Right cardiac atrium (tissue), 5 donors: ENCODE measurements at regions of chr1 and their contacts with region 1.

Region 1: DNA sequence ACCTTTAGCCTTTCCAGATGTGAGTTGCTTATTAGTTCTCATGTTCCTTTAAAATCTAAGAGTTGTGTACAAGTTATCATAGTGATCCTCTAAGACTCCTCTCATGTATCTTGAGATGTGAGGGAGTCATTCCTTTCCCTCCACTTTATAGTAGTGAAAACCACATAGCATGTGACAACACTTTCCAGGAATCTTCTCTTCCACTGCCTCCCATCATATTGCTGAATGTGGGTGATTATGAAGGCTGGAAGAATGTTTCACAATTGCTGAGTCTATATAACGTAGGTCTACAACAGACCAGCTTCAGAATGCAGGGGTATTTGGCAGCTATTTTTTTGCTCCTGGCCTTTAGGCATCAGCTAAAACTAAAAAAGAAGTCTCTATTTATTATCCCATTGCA is 44.7 kb upstream of the LRRC7 start:
- DNase-seq: no peak
- ATAC-seq: no peak
- H3K4me3 ChIP-seq: no peak overlapping the region
- H3K27ac ChIP-seq: no peak overlapping the region
- H3K4me1 ChIP-seq: no peaks in the 10 kb centered on the region
- H3K27me3 ChIP-seq: no peaks in the 10 kb centered on the region

Region 2: GRCh38 chr1:69551476-69552324 is 28.7 kb after region 1 on chr1:
- intact Hi-C with region 1: loop called in 1 of 4 experiments (anchors 2 kb)
- DNase-seq: no peak
- ATAC-seq: no peak
- H3K4me3 ChIP-seq: no peak overlapping the region
- H3K27ac ChIP-seq: no peak overlapping the region
- H3K4me1 ChIP-seq: no peaks in the 10 kb centered on the region
- H3K27me3 ChIP-seq: no peaks in the 10 kb centered on the region

Region 3: GRCh38 chr1:70072231-70072751 is 549.3 kb after region 1 on chr1:
- intact Hi-C with region 1: no loop called
- DNase-seq: no peak
- ATAC-seq: no peak
- H3K4me3 ChIP-seq: no peak overlapping the region
- H3K27ac ChIP-seq: no peak overlapping the region
- H3K4me1 ChIP-seq: no peaks in the 10 kb centered on the region
- H3K27me3 ChIP-seq: no peaks in the 10 kb centered on the region